ENCODE measurements at regions of chr12 and their contacts with region 1.

Region 1: DNA sequence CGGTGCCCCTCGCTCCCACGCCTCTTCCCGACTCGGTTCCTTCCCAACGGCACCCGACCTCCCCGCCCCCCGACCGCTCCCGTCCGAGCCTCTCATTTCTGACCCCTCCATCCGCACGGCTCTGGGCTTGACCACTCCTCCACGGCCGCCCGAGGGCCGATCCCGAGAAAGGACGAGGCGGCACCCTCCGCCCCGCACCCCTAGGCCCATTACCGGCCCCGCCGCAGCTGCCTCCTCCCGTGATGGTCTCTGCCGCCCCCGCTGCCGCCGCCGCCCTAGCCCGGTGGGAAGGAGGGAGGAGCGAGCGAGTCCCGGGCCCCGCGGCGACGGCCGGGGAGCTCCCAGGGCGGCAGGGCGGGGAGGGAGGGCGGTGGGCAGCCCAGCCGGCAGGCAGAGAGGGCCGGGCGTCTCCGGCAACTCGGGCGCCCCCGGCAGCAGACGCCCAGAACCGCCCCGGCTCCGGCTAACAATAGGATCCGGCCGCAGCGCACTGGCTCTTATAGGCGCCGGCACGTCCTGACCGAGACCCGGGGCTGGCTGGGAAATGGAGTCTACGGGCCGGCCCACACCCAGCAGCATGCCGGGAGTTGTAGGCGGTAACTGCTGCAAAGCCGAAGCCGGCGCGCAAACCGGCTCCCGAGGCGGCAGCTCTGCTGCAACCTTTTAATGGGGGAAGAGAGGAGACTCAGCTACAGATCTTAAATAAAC is at the start of gene CSRNP2:
- DNase-seq: peak; percentile 92
- ATAC-seq: peak; percentile 99
- H3K4me3 Mint-ChIP-seq: peak within 1 kb of the TSS; percentile 96
- H3K27ac Mint-ChIP-seq: peak within 1 kb of the TSS; percentile 71
- H3K4me1 Mint-ChIP-seq: peaks cover 20% of the 10 kb centered on the region
- H3K27me3 Mint-ChIP-seq: no peaks in the 10 kb centered on the region
- CTCF ChIP-seq: no peak
- total RNA-seq, gene CSRNP2: 16.9 and 17.7 TPM in 2 replicates

Region 2: GRCh38 chr12:50375802-50376201 is 707.5 kb before region 1 on chr12:
- CTCF ChIA-PET with region 1: no interaction called
- POLR2A ChIA-PET with region 1: no interaction called
- intact Hi-C with region 1: no loop called
- DNase-seq: no peak
- ATAC-seq: no peak
- H3K4me3 Mint-ChIP-seq: no peak overlapping the region
- H3K27ac Mint-ChIP-seq: no peak overlapping the region
- H3K4me1 Mint-ChIP-seq: no peaks in the 10 kb centered on the region
- H3K27me3 Mint-ChIP-seq: no peaks in the 10 kb centered on the region
- CTCF ChIP-seq: no peak

Region 3: DNA sequence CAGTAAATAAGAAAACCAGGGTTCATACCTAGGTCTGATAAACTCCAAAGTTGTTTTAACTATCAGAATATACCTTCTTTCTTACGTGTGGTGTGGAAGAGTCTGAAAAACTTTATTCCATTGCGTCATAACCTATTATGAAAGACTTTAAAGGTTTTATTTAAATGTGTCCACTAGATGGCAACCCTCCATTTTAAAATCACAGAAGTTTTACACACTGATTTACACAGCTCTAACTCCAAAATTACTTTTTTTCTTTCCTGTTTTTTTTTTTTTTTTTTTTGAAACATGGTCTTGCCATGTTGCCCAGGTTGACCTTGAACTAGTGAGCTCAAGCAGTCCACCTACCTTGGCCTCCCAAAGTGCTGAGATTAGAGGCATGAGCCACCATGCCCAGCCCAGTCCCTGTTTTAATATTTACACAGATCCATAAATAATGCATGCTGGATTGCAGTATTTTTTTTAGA is 257.9 kb before region 1 on chr12:
- CTCF ChIA-PET with region 1: no interaction called
- POLR2A ChIA-PET with region 1: no interaction called
- intact Hi-C with region 1: loop called (anchors 10 kb)
- DNase-seq: no peak
- ATAC-seq: peak; percentile 80
- H3K4me3 Mint-ChIP-seq: no peak overlapping the region
- H3K27ac Mint-ChIP-seq: no peak overlapping the region
- H3K4me1 Mint-ChIP-seq: peaks cover 6% of the 10 kb centered on the region
- H3K27me3 Mint-ChIP-seq: no peaks in the 10 kb centered on the region
- CTCF ChIP-seq: no peak

Region 4: DNA sequence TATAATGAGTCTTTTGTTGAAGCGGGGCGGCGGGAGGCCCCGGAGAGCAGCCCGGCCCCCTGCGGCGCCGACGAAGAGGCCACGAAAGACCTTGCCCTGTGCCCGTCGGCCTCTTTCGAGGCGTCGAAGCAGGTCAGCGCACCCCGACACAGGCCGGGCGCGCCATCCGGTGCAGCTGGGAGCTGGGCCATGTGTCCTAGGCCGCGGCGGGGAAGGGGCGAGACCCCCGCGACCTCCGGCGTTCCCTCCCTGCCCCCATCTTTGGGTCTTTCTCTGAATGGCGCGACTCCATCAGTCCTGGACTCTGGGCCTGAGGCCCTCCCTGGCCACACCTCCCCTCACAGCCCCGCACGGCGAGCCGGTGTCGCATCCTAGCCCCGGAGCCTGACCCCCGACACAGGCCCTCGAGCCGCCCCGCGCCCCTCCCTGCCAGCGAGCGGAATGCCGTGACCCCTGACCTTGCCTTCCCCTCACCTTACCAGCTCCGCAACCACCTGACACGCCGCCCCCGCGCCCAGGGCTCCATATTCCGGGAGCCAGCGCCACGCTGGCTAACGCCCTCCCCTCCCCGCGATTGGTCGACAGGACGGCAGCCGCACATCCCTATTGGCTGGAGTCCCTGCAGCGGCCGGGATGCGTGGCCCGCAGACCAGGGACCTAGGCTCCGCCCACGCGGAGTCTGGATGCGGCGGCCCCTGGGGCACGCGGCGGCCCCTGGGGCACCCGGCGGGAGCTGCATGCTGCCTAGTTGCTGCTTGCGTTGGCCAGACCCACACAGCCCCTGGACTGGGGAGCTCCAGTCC is 57.2 kb before region 1 on chr12 and contains the start of gene SLC11A2:
- CTCF ChIA-PET with region 1: no interaction called
- POLR2A ChIA-PET with region 1: interaction called, 3 read pairs
- intact Hi-C with region 1: loop called (anchors 1 kb)
- DNase-seq: peak; percentile 86
- ATAC-seq: peak; percentile 98
- H3K4me3 Mint-ChIP-seq: peak within 1 kb of the TSS; percentile 99
- H3K27ac Mint-ChIP-seq: peak within 1 kb of the TSS; percentile 93
- H3K4me1 Mint-ChIP-seq: peaks cover 42% of the 10 kb centered on the region
- H3K27me3 Mint-ChIP-seq: no peaks in the 10 kb centered on the region
- CTCF ChIP-seq: no peak
- total RNA-seq, gene SLC11A2: 32.3 and 44.6 TPM in 2 replicates

Region 5: DNA sequence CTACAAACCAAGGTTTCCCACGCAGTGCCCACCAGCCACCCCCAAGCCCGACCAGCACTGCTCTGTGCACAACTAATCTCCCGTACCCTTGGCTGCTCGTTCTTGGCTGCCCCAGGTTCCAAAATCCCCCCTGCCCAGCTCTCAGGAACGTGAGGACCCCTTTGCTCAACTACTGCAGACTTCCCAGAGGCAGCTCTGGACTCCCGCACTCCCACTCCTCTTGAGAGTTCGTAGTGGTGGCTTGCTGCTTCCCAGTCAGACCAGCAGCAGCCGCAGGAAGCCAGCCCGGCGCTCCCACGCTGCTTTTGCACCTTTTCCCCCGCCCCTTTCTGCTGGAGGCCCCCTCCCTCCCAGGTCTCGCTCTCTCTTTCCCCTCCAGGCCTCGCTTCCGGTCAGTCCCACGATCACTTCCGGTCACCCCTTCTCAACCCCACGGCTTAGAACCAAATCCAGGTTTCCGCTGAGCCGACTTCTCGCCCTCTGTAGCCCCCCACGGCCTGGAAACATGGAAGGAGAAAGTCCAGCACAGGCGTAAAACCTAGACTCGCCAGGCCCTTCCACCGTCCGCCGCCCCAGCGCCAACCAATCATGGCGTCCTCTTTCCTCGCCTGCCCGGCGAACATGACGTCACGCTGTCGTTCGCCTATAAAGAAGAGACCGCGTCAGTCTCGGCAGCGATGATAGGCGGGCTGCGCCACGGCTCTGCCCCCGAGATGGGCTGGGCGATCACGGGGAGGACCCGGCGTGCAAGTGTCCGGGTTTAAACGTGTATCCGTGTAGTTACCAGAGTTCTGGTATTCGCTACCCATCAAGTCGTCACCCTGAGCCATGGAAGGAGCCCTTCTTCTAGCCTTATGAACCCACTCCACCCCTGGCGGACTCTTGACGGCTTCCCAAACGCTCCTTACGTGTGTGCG is 89.5 kb after region 1 on chr12 and contains the start of gene TFCP2:
- CTCF ChIA-PET with region 1: no interaction called
- POLR2A ChIA-PET with region 1: interaction called, 6 read pairs
- intact Hi-C with region 1: loop called (anchors 2 kb)
- DNase-seq: peak; percentile 84
- ATAC-seq: peak; percentile 98
- H3K4me3 Mint-ChIP-seq: peak within 1 kb of the TSS; percentile 77
- H3K27ac Mint-ChIP-seq: peak within 1 kb of the TSS; percentile 68
- H3K4me1 Mint-ChIP-seq: peaks cover 9% of the 10 kb centered on the region
- H3K27me3 Mint-ChIP-seq: no peaks in the 10 kb centered on the region
- CTCF ChIP-seq: no peak
- total RNA-seq, gene TFCP2: 34.9 and 36.7 TPM in 2 replicates

Region 6: DNA sequence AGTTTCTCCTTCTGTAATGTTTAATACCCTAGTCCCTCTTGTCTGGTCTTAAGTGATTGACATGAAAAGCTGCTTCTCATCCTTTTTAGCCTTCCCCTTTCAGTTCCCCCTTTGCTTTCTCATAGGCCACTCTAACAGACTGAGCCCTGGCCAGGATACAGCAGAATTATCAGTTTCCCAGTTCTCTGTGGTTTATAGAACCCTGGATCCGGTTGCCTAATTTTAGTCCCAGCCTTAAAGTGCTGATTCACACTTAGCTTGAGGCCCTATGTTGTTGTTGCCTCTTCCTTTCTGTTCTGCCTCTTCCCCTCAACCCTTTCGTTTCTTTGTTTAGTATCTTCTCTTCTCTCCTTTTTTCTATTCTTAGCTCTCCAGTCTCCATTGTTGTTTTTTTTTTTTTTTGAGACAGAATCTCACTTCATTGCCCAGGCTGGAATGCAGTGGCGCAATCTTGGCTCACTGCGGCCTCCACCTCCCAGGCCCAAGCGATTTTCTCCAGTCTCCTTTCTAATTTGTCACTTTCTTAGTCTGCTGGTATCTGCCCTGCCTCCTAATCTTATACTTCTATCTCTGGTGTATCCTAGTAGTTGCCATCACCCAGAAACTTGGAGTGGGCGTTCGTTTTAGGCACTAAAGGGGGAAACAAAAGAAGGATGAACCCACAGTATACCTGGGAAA is 243.6 kb after region 1 on chr12:
- CTCF ChIA-PET with region 1: no interaction called
- POLR2A ChIA-PET with region 1: no interaction called
- intact Hi-C with region 1: loop called (anchors 10 kb)
- DNase-seq: no peak
- ATAC-seq: peak; percentile 41
- H3K4me3 Mint-ChIP-seq: peak overlapping the region; percentile 62
- H3K27ac Mint-ChIP-seq: peak overlapping the region; percentile 72
- H3K4me1 Mint-ChIP-seq: peaks cover 81% of the 10 kb centered on the region
- H3K27me3 Mint-ChIP-seq: no peaks in the 10 kb centered on the region
- CTCF ChIP-seq: no peak

Region 7: GRCh38 chr12:51531978-51532497 is 448.8 kb after region 1 on chr12:
- CTCF ChIA-PET with region 1: no interaction called
- POLR2A ChIA-PET with region 1: no interaction called
- intact Hi-C with region 1: loop called (anchors 10 kb)
- DNase-seq: peak; percentile 56
- ATAC-seq: peak; percentile 97
- H3K4me3 Mint-ChIP-seq: no peak overlapping the region
- H3K27ac Mint-ChIP-seq: no peak overlapping the region
- H3K4me1 Mint-ChIP-seq: peaks cover 11% of the 10 kb centered on the region
- H3K27me3 Mint-ChIP-seq: peaks cover 28% of the 10 kb centered on the region
- CTCF ChIP-seq: peak; percentile 51

Region 8: GRCh38 chr12:52221912-52222457 is 1138.7 kb after region 1 on chr12:
- CTCF ChIA-PET with region 1: no interaction called
- POLR2A ChIA-PET with region 1: no interaction called
- intact Hi-C with region 1: no loop called
- DNase-seq: no peak
- ATAC-seq: no peak
- H3K4me3 Mint-ChIP-seq: no peak overlapping the region
- H3K27ac Mint-ChIP-seq: no peak overlapping the region
- H3K4me1 Mint-ChIP-seq: no peaks in the 10 kb centered on the region
- H3K27me3 Mint-ChIP-seq: peaks cover 20% of the 10 kb centered on the region
- CTCF ChIP-seq: no peak